Caki2 (cell line): ENCODE measurements at regions of chr7 and their contacts with region 1.

Region 1: DNA sequence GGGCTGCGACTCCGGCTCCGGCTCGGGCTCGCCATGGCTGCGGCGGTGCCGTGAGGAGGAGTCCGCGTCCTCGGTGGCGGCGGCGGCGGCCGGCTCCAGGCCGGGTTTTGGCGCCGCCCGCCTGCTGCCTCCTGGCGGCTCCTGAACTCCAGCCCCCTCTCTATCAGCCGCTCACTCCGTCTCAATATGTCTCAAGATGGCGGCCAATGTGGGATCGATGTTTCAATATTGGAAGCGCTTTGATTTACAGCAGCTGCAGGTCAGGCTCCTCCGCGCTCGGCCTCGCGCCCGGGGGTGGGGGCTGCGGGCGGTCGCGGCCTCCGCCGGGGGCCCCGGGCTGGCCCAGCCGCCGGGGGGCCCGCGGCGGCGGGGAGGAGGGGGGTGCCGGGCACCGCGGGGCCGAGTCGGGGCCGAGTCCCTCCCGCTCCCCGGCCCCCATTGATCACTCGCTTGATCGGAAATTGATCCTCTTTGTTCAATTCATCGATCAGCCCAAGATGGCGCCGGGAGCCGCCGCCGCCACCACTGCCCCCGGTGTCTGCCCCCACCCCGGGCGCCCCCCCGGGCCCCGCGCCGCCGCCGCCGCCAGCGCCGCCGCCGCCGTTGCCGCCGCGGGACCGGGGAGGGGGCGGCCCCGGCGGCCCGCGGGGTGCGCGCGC is 1.5 kb upstream of the CUX1 start:
- DNase-seq: peak; percentile 67

Region 2: DNA sequence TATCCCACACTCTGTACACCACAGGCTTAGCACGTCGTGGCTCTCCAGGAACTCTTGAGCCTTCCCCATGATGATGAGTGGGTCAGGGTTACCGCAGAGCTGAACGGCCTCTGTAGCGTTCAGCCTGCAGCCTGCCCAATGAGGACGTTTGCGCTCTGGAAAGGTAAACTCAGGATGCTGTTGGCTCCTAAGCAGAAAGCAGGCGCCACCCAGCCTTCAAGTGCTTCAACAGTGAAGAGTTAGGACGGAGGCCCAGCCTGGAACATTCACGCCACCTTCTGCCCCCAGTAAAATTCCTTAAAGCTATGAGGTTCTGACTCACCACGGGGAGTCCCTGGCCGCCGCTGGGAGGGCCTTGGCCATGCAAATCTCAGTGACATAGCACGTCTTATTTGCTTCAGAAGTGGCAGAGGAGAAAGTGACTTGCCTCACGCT is 309.2 kb after region 1 on chr7:
- in situ Hi-C with region 1: loop called (anchors 25 kb)
- DNase-seq: peak; percentile 97